H1 (cell line): ENCODE measurements at regions of chr2 and their contacts with region 1.

Region 1: GRCh38 chr2:176140513-176141317 is 10.6 kb upstream of the HOXD4 start:
- DNase-seq: peak; percentile 66 to 92
- H3K4me3 ChIP-seq: peak overlapping the region; percentile 35 to 67 (median 59)
- H3K27ac ChIP-seq: no peak overlapping the region
- H3K4me1 ChIP-seq: peaks cover 0 to 9% (median 4%) of the 10 kb centered on the region in 4 experiments; a peak in 5 of 7 replicates
- H3K27me3 ChIP-seq: peaks cover 81 to 100% (median 96%) of the 10 kb centered on the region in 4 experiments
- CTCF ChIP-seq: peak; percentile 84 to 96 (median 93)
- EP300 ChIP-seq: no peak
- POLR2A ChIP-seq: no peak
- RAD21 ChIP-seq: peak; percentile 96

Region 2: GRCh38 chr2:176118601-176119339 is 21.9 kb before region 1 on chr2:
- CTCF ChIA-PET with region 1: interaction called, 14 read pairs
- POLR2A ChIA-PET with region 1: no interaction called
- DNase-seq: peak in 1 of 2 experiments; percentile 69
- H3K4me3 ChIP-seq: no peak overlapping the region
- H3K27ac ChIP-seq: no peak overlapping the region
- H3K4me1 ChIP-seq: peaks cover 0 to 13% (median 6%) of the 10 kb centered on the region in 4 experiments; a peak in 4 of 7 replicates
- H3K27me3 ChIP-seq: peaks cover 93 to 100% (median 100%) of the 10 kb centered on the region in 4 experiments
- CTCF ChIP-seq: peak; percentile 56 to 67 (median 64)
- EP300 ChIP-seq: no peak
- POLR2A ChIP-seq: no peak
- RAD21 ChIP-seq: peak; percentile 15 to 37; a peak in 3 of 4 replicates

Region 3: DNA sequence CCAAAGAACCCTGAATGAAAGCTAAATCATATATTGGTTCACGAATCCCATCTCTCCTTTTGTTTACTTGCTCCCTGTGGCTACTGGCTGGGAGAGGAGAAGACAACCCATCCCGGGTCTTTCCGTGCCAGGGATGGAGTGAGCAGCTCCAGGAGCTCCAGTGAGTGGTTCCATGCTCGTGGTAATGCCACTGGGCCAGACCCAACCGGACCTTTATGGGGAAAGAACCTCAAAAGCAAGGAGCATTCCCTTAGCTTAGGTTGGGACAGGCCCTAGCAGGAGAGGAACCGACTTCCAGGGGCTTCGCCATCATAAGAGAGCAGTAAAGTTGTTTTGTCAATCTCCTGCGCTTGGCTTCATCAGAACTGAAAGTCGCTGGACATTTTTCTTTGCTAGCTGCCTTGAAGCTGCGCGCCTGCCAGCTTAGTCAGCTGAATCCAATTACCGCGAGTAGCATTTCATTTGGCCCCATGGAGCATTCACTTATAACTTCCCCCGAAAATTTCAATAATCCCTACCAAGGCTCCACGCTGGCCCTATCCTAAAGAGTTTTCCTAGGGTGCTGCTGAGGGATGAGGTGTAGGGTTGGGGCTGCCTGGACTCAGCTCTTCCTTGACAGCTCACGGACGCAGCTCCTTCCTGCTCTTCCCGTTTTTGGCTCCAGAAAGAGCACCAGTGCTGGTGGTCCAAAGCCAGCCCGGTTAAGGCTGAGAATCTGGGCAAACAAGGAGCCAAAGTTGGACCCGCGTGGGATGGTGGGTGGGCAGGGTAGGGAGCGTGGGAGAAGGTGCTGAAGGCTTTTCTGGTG is 21.3 kb after region 1 on chr2:
- CTCF ChIA-PET with region 1: interaction called, 25 read pairs
- POLR2A ChIA-PET with region 1: interaction called, 4 read pairs
- DNase-seq: no peak
- H3K4me3 ChIP-seq: no peak overlapping the region
- H3K27ac ChIP-seq: no peak overlapping the region
- H3K4me1 ChIP-seq: peaks cover 0 to 12% (median 6%) of the 10 kb centered on the region in 4 experiments; a peak in 5 of 7 replicates
- H3K27me3 ChIP-seq: peaks cover 98 to 100% (median 100%) of the 10 kb centered on the region in 4 experiments
- CTCF ChIP-seq: no peak
- EP300 ChIP-seq: no peak
- POLR2A ChIP-seq: no peak
- RAD21 ChIP-seq: no peak

Region 4: GRCh38 chr2:176187899-176188773 is 47.4 kb after region 1 on chr2 and contains the start of gene HOXD1:
- CTCF ChIA-PET with region 1: interaction called, 25 read pairs
- POLR2A ChIA-PET with region 1: interaction called, 3 read pairs
- DNase-seq: peak in 1 of 2 experiments; percentile 82
- H3K4me3 ChIP-seq: peak within 1 kb of the TSS; percentile 5 to 54 (median 30); a peak in 7 of 8 replicates
- H3K27ac ChIP-seq: no peak within 1 kb of the TSS
- H3K4me1 ChIP-seq: peaks cover 5 to 12% (median 6%) of the 10 kb centered on the region in 4 experiments; a peak in 5 of 7 replicates
- H3K27me3 ChIP-seq: peaks cover 74 to 99% (median 91%) of the 10 kb centered on the region in 4 experiments
- CTCF ChIP-seq: no peak
- EP300 ChIP-seq: no peak
- POLR2A ChIP-seq: peak in 1 of 2 experiments; percentile 20; a peak in 1 of 3 replicates
- RAD21 ChIP-seq: no peak
- total RNA-seq, gene HOXD1: not detected in 2 replicates

Region 5: DNA sequence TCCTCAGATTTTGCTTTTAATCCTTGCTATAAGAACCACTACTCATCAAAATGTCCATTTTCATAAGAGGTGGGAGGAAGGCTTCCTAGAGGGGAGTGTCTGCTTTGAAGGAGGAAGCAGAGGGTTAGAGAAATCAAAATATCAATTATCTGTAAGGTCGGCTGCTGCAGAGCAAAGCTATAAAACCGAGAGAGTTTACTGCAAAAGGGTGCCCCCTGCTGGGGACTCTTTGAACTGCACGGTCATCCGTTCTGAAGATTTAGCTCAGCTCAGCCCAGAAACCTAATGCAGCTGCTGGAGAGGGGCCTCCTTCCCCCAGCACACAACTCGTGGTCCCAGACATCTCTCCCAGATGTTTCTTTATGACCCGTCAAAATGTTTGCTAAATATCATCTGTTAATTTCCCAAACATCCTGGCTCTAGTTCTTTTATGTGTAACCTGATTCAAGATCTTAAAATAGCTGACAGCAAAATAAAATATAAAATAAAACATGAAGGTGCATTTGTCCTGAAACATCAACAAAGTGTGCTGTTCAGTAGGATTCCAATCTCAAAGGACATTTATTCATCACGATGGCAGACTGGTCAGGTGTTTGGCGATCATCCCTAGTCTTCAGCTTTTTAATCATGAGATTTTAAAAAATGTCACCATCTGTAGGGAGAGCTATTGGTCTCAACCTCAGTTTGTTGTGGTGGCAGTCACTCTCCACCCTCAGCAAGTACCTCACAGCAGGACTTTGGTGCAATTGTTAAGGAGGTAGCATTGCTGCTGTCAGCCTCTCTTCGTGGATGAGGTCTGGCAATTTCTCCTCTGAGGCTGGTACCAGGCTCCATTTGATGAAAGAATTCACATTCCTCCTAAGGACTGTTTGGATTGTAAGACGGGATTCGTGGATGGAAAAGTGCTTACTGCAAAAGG is 314.4 kb after region 1 on chr2:
- CTCF ChIA-PET with region 1: interaction called, 111 read pairs
- POLR2A ChIA-PET with region 1: no interaction called
- DNase-seq: peak; percentile 67 to 98
- H3K4me3 ChIP-seq: no peak overlapping the region
- H3K27ac ChIP-seq: no peak overlapping the region
- H3K4me1 ChIP-seq: peaks cover 0 to 14% (median 7%) of the 10 kb centered on the region in 4 experiments; a peak in 5 of 7 replicates
- H3K27me3 ChIP-seq: no peaks in the 10 kb centered on the region
- CTCF ChIP-seq: peak; percentile 57 to 82 (median 79)
- EP300 ChIP-seq: no peak
- POLR2A ChIP-seq: no peak
- RAD21 ChIP-seq: peak; percentile 91 to 94

Region 6: DNA sequence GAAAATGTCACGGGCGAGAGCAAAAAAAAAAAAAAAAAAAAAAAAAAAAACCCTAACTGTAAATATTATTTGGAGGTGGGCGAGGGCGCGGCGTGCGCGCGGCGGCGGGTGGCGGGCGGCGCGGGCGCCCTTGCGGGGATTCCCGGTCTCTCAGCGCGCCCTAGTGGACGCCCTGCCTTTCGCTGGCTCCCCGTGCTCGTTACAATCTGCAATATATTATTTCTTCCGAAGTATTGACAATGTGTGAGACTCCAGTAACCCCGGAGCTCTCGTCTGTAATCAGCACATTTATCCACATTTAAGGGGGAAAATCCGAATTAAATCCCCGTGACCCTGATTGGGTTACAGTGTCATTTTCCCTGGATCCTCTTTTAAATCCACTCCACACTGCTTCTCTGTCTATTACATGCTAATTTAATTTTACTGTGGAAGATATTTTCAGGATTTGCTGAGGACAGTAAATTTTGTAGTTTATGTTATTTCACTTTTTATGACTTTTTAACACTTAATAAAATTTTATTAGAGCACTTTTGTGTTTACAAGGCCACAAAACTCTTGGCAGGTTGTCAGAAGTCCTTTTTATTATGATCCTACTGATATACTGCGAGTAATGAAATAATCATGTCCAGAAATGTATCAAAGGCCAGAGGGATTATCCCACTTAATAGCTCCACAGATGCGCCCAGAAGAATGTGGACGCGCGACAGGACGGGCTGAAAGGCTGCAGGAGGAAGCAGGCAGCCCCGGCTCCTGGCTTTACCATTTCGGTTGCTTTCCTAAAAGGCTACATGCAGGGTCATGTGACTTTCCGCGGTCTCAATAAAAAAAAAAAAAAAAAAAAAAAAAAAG is 497.7 kb after region 1 on chr2:
- CTCF ChIA-PET with region 1: interaction called, 119 read pairs
- POLR2A ChIA-PET with region 1: no interaction called
- DNase-seq: peak in 1 of 2 experiments; percentile 79
- H3K4me3 ChIP-seq: peak overlapping the region; percentile 34 to 68 (median 45)
- H3K27ac ChIP-seq: no peak overlapping the region
- H3K4me1 ChIP-seq: peaks cover 0 to 5% (median 0%) of the 10 kb centered on the region in 4 experiments; a peak in 2 of 7 replicates
- H3K27me3 ChIP-seq: peaks cover 12 to 35% (median 20%) of the 10 kb centered on the region in 4 experiments
- CTCF ChIP-seq: peak; percentile 56 to 79 (median 78)
- EP300 ChIP-seq: no peak
- POLR2A ChIP-seq: no peak
- RAD21 ChIP-seq: peak; percentile 81 to 88